ENCODE measurements at regions of chr6 and their contacts with region 1.

Region 1: GRCh38 chr6:137717074-137718073 is 149.7 kb upstream of the TNFAIP3 start:
- DNase-seq: peak; percentile 60 to 94
- ATAC-seq: peak; percentile 48 to 58 (median 52)
- H3K4me3 ChIP-seq: no peak overlapping the region
- H3K4me3 Mint-ChIP-seq: peak overlapping the region; percentile 74
- H3K27ac ChIP-seq: peak overlapping the region; percentile 81
- H3K27ac Mint-ChIP-seq: peak overlapping the region; percentile 87 to 97
- H3K4me1 ChIP-seq: peaks cover 21% of the 10 kb centered on the region
- H3K4me1 Mint-ChIP-seq: peaks cover 55 to 59% of the 10 kb centered on the region in 2 donors
- H3K27me3 ChIP-seq: no peaks in the 10 kb centered on the region
- H3K27me3 Mint-ChIP-seq: peaks cover 4 to 15% of the 10 kb centered on the region in 2 donors
- CTCF ChIP-seq: no peak

Region 2: DNA sequence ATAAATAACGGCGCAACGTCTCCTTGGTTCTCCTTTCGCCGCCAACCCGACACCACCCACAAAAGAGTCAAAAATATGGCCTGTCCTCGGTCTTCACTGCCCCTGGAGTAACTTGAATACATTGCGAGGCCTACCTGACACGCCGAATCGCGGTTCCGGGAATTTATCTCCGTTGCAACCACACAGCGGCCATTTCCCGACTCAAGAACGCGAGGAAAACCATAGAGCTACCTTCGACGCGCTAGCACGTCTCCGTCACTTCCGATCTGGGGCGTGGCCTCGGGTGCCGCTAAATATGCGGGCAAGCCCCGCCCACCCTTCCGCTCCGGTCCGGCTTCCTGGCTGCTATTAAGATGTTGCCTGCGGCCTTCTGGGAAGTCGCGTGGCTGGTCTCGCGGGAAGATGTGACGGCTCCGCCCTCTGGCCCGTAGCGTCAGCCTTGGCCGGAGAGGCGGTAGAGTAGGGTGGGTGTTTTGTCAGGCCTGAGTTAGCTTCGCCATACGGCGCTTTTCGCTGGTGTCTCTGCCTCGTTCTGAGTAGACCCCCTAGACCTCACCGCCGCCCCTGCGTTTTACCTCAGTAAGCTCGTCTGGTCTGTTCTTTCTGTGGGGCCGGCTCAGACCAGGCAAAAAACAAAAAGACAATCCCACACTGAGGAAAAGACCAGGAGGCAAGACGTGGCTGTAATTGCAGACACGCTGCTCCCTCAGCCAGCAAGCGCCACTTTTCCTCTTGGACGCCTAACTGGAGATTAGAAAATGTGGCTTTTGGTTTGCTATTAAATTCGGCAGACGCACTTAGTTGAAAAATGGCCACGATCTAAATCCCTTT is 1427.6 kb before region 1 on chr6 and contains the start of gene BCLAF1:
- intact Hi-C with region 1: loop called (anchors 10 kb)
- DNase-seq: peak; percentile 99 to 100
- ATAC-seq: peak; percentile 68 to 88 (median 74)
- H3K4me3 ChIP-seq: peak within 1 kb of the TSS; percentile 91
- H3K4me3 Mint-ChIP-seq: peak within 1 kb of the TSS; percentile 98
- H3K27ac ChIP-seq: peak within 1 kb of the TSS; percentile 97
- H3K27ac Mint-ChIP-seq: peak within 1 kb of the TSS; percentile 95 to 99
- H3K4me1 ChIP-seq: peaks cover 40% of the 10 kb centered on the region
- H3K4me1 Mint-ChIP-seq: peaks cover 52 to 63% of the 10 kb centered on the region in 2 donors
- H3K27me3 ChIP-seq: no peaks in the 10 kb centered on the region
- H3K27me3 Mint-ChIP-seq: no peaks in the 10 kb centered on the region
- CTCF ChIP-seq: no peak
- total RNA-seq, gene BCLAF1: 391 to 582 (median 465) TPM

Region 3: GRCh38 chr6:137033828-137034227 is 683.5 kb before region 1 on chr6:
- intact Hi-C with region 1: loop called (anchors 5 kb)
- DNase-seq: peak; percentile 63 to 81
- ATAC-seq: peak; percentile 92 to 99 (median 92)
- H3K4me3 ChIP-seq: no peak overlapping the region
- H3K4me3 Mint-ChIP-seq: peak overlapping the region; percentile 69
- H3K27ac ChIP-seq: no peak overlapping the region
- H3K27ac Mint-ChIP-seq: peak overlapping the region; percentile 73 to 77
- H3K4me1 ChIP-seq: peaks cover 17% of the 10 kb centered on the region
- H3K4me1 Mint-ChIP-seq: peaks cover 14 to 22% of the 10 kb centered on the region in 2 donors
- H3K27me3 ChIP-seq: peaks cover 67% of the 10 kb centered on the region
- H3K27me3 Mint-ChIP-seq: peaks cover 70 to 83% of the 10 kb centered on the region in 2 donors
- CTCF ChIP-seq: no peak

Region 4: DNA sequence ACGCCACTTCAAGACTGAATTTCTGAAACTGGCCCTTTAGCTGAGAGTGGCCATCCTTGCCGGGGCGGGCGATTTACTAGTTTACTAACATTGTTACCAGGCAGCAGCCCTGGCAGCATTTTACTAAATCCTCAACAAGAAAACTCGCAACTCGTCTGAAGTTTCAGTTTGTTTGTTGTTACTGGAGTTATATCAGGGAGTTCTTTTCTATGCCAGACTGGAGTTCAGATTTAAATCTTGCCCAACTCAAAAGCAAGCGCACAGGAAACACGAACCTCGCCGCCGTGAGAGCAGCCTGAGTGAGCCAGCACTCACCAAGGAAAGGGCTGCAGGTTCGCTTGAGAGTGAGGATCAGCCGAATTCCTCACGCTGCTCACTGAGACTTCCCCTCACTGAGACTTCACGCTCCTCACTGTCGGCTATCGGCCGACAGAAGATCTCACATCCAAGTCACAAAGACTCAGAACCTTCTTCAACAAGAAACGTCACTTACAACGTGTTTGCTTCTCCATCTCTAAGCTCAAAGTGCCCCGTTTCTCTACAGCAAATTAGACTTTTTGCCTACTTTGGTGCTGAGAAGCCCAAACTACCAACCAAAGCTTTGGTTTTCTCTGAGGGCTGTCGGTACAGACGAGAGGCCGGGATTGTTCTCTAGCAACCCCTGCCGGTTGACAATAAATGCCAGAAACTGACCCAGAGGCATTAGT is 302.1 kb before region 1 on chr6:
- intact Hi-C with region 1: no loop called
- DNase-seq: peak; percentile 50 to 85
- ATAC-seq: peak; percentile 90 to 93 (median 91)
- H3K4me3 ChIP-seq: peak overlapping the region; percentile 41
- H3K4me3 Mint-ChIP-seq: peak overlapping the region; percentile 93
- H3K27ac ChIP-seq: peak overlapping the region; percentile 87
- H3K27ac Mint-ChIP-seq: peak overlapping the region; percentile 94 to 98
- H3K4me1 ChIP-seq: peaks cover 16% of the 10 kb centered on the region
- H3K4me1 Mint-ChIP-seq: peaks cover 20 to 21% of the 10 kb centered on the region in 2 donors
- H3K27me3 ChIP-seq: no peaks in the 10 kb centered on the region
- H3K27me3 Mint-ChIP-seq: no peaks in the 10 kb centered on the region
- CTCF ChIP-seq: peak; percentile 74

Region 5: GRCh38 chr6:137764464-137764863 is 47.1 kb after region 1 on chr6:
- intact Hi-C with region 1: loop called (anchors 1 kb)
- DNase-seq: no peak
- ATAC-seq: no peak
- H3K4me3 ChIP-seq: no peak overlapping the region
- H3K4me3 Mint-ChIP-seq: no peak overlapping the region
- H3K27ac ChIP-seq: no peak overlapping the region
- H3K27ac Mint-ChIP-seq: peak overlapping the region; percentile 73 to 89
- H3K4me1 ChIP-seq: peaks cover 23% of the 10 kb centered on the region
- H3K4me1 Mint-ChIP-seq: peaks cover 36 to 44% of the 10 kb centered on the region in 2 donors
- H3K27me3 ChIP-seq: no peaks in the 10 kb centered on the region
- H3K27me3 Mint-ChIP-seq: peaks cover 0 to 9% of the 10 kb centered on the region in 2 donors
- CTCF ChIP-seq: no peak

Measured in natural killer cell (primary cell).